ENCODE measurements at regions of chr18 and their contacts with region 1.

Region 1: GRCh38 chr18:8830067-8831060 is 125.0 kb downstream of the MTCL1 start:
- DNase-seq: no peak
- ATAC-seq: peak; percentile 72
- H3K4me3 ChIP-seq: no peak overlapping the region
- H3K27ac ChIP-seq: no peak overlapping the region
- H3K4me1 ChIP-seq: peaks cover 8 to 20% of the 10 kb centered on the region in 2 experiments; a peak in 4 of 5 replicates
- H3K27me3 ChIP-seq: peaks cover 25 to 46% of the 10 kb centered on the region in 2 experiments
- CTCF ChIP-seq: no peak
- EP300 ChIP-seq: no peak
- POLR2A ChIP-seq: no peak
- RAD21 ChIP-seq: no peak

Region 2: DNA sequence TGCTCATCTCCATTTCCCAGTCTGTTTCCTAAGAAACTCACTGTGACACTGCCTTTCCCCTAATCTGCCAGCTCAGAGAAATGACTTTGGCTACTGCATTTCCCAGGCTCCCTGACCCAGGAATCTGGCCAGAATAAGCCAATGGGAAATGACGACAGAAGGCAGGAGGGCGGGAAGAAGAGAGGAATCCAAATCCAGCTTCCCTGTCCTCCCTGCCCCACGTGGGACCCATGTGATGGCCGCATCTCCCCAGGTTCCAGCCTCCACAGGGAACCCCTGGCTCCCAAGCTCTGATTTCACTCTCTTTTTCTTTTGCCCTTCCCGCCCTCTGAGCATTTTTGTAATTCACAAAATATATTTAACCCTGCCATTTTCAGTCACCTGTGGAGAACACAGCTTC is 259.0 kb before region 1 on chr18:
- CTCF ChIA-PET with region 1: no interaction called
- POLR2A ChIA-PET with region 1: no interaction called
- in situ Hi-C with region 1: no loop called
- intact Hi-C with region 1: no loop called
- DNase-seq: no peak
- ATAC-seq: no peak
- H3K4me3 ChIP-seq: no peak overlapping the region
- H3K27ac ChIP-seq: no peak overlapping the region
- H3K4me1 ChIP-seq: no peaks in the 10 kb centered on the region
- H3K27me3 ChIP-seq: peaks cover 11 to 20% of the 10 kb centered on the region in 2 experiments; a peak in 4 of 5 replicates
- CTCF ChIP-seq: no peak
- EP300 ChIP-seq: no peak
- POLR2A ChIP-seq: no peak
- RAD21 ChIP-seq: no peak

Region 3: DNA sequence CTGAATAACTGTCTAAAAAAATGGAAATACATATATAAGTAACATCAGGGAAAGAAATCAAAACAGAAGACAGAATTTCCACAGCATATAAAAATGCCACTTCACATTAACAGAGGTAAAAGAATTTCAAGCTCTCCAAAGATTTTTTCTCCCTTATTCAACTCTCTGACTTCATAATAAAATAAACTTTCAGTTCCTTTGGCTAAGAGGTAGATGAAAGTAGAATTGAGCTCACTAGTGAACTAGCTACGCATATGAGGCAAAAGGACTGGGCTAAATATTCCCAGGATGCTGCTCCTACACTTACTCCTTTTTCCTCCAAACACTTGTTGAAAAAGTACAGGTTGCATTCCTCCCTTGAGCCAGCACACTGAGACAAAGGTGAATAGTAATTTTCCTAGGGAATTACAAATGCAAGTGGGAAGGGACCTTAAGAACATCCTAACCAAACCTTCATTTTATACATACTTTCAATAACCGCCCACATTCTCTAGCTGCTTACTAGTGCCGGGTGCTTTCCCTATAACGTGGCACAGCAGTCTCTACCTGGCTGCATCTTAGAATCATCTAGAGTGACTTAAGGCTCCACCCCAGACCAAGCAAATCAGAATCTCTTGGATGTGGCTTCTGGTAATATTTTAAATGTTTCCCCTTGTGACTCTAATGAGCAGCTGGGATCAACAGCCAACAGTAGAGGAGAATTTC is 11.6 kb after region 1 on chr18:
- CTCF ChIA-PET with region 1: no interaction called
- POLR2A ChIA-PET with region 1: interaction called, 19 read pairs
- in situ Hi-C with region 1: no loop called
- intact Hi-C with region 1: no loop called
- DNase-seq: no peak
- ATAC-seq: no peak
- H3K4me3 ChIP-seq: no peak overlapping the region
- H3K27ac ChIP-seq: no peak overlapping the region
- H3K4me1 ChIP-seq: no peaks in the 10 kb centered on the region
- H3K27me3 ChIP-seq: peaks cover 27 to 42% of the 10 kb centered on the region in 2 experiments
- CTCF ChIP-seq: no peak
- EP300 ChIP-seq: no peak
- POLR2A ChIP-seq: no peak
- RAD21 ChIP-seq: no peak

Region 4: DNA sequence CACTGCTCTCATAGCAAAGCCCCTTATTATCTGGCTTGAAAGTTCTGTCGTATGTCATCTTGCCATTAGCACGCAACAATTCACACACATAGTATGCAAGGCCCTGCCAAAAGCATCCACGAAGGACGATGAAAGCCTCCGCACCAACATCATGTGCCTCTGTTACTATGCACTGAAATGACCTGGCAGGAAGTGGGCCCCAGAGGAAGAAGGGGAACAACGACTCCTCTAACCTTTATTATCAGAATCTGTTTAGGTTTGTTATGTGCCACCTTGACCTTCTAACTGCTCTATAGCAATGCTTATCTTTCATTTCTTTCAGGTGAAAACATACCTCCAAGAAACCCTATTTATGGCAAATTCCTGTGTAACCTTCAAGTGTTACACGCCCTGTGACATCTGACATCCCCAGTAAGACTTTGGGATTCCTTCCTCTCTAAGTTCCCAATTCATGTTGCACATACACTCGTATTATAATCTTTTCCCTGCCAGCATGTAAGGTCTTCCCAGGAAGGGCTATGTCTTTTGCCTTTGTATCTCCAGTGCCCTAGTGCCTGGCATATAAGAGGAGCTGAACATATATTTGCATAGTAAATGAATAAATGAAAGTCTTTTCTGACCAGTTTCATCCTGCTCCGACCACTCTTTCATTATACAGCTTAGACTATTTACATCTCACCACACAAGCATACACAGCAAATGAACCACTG is 265.1 kb after region 1 on chr18:
- CTCF ChIA-PET with region 1: no interaction called
- POLR2A ChIA-PET with region 1: no interaction called
- in situ Hi-C with region 1: no loop called
- intact Hi-C with region 1: no loop called
- DNase-seq: peak in 2 of 4 experiments; percentile 34 to 46
- ATAC-seq: peak; percentile 69
- H3K4me3 ChIP-seq: no peak overlapping the region
- H3K27ac ChIP-seq: peak overlapping the region; percentile 50
- H3K4me1 ChIP-seq: peaks cover 0 to 21% of the 10 kb centered on the region in 2 experiments; a peak in 3 of 5 replicates
- H3K27me3 ChIP-seq: no peaks in the 10 kb centered on the region
- CTCF ChIP-seq: no peak
- EP300 ChIP-seq: no peak
- POLR2A ChIP-seq: no peak
- RAD21 ChIP-seq: no peak